IMR-90 (cell line): ENCODE measurements at regions of chr1 and their contacts with region 1.

Region 1: GRCh38 chr1:42908046-42908445 is 50.6 kb downstream of the SLC2A1 start:
- DNase-seq: no peak
- ATAC-seq: no peak
- H3K4me3 ChIP-seq: no peak overlapping the region
- H3K27ac ChIP-seq: no peak overlapping the region
- H3K4me1 ChIP-seq: no peaks in the 10 kb centered on the region
- H3K27me3 ChIP-seq: peaks cover 18% of the 10 kb centered on the region
- CTCF ChIP-seq: no peak
- POLR2A ChIP-seq: no peak
- RAD21 ChIP-seq: no peak

Region 2: DNA sequence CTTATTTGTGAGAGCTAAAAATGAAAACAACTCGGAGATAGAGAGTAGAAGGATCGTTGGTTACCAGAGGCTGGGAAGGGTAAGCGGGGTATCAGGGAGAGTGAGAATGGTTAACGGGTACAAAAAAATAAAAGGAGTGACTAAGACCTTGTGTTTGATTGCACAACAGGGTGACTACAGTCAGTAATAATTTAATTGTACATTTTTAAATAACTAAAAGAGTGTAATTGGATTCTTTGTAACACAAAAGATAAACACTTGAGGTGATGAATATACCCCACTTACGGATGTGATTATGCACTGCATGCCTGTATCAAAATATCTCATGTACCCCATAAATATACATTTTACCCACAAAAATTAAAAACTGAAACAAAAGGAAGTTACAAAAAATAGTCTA is 602.4 kb before region 1 on chr1:
- CTCF ChIA-PET with region 1: no interaction called
- POLR2A ChIA-PET with region 1: no interaction called
- dilution Hi-C with region 1: no loop called
- in situ Hi-C with region 1: no loop called
- intact Hi-C with region 1: no loop called
- DNase-seq: peak; percentile 54
- ATAC-seq: peak; percentile 63
- H3K4me3 ChIP-seq: no peak overlapping the region
- H3K27ac ChIP-seq: no peak overlapping the region
- H3K4me1 ChIP-seq: peaks cover 5% of the 10 kb centered on the region
- H3K27me3 ChIP-seq: no peaks in the 10 kb centered on the region
- CTCF ChIP-seq: no peak
- POLR2A ChIP-seq: no peak
- RAD21 ChIP-seq: no peak

Region 3: DNA sequence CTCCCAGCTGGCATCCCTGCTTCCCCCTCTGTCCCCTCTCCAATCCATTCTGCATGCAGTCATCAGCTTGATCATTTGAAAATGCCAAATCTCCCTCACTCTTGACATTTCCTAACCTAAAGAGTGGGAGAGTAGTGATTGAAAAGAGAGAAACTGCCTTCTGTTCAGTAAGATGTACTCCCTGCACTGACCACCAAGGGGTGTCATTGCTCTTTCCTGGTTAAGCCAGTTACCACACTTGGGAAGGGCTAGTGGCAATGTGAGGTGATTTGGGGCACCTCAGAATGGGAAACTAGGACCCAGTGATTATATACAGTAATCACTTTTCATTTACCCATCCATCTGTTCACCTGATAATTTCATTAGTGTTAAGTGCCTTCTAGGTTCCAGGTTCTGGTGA is 130.2 kb before region 1 on chr1:
- CTCF ChIA-PET with region 1: interaction called, 3 read pairs
- POLR2A ChIA-PET with region 1: no interaction called
- dilution Hi-C with region 1: no loop called
- in situ Hi-C with region 1: loop called (anchors 10 kb)
- intact Hi-C with region 1: loop called (anchors 2 kb)
- DNase-seq: peak; percentile 46
- ATAC-seq: peak; percentile 95
- H3K4me3 ChIP-seq: no peak overlapping the region
- H3K27ac ChIP-seq: no peak overlapping the region
- H3K4me1 ChIP-seq: no peaks in the 10 kb centered on the region
- H3K27me3 ChIP-seq: no peaks in the 10 kb centered on the region
- CTCF ChIP-seq: peak; percentile 71
- POLR2A ChIP-seq: no peak
- RAD21 ChIP-seq: peak; percentile 86

Region 4: DNA sequence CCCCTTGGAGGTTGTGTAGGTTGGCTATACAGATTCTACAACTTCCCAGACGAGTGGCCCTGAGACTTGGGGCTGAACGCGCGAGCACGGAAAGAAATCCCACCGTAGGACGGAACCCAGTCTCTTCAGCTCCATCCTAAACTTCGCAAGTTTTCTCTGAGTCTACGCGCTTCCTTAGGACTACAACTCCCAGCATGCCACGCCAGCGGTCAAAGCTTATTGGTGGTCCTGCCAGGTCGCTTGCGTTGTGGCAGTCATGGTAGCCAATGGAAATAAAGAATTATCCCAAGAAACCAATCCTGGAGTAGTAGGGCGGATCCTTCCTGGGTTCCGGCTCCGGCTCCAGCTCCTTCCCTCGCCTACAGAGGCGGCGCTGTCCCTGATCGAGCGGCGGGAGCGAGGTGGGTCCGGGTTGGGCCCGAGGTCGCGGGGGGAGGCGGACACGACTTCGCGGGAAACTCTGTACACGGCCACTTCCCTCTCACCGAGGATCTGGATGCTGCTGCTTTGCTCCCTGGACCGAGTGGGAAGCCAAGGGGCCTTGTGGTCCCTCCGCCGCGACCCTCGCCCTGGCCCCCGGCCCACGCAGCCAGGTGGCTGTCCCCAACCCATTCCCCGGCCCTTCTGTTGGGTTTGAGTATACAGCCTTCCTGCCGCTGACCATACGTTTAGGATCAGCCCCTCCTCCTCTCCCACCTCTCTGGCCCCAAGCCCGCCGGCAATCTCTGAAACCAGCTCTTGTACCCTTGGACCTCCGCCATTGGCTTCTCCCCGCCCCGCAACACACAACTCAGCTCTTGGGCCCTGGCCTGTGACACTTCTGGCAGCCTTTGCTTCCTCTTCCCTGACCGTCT is 61.6 kb before region 1 on chr1 and contains the start of gene ZNF691:
- CTCF ChIA-PET with region 1: no interaction called
- POLR2A ChIA-PET with region 1: no interaction called
- dilution Hi-C with region 1: no loop called
- in situ Hi-C with region 1: no loop called
- intact Hi-C with region 1: no loop called
- DNase-seq: peak; percentile 98
- ATAC-seq: peak; percentile 98
- H3K4me3 ChIP-seq: peak within 1 kb of the TSS; percentile 67
- H3K27ac ChIP-seq: peak within 1 kb of the TSS; percentile 60
- H3K4me1 ChIP-seq: peaks cover 6% of the 10 kb centered on the region
- H3K27me3 ChIP-seq: no peaks in the 10 kb centered on the region
- CTCF ChIP-seq: peak; percentile 42
- POLR2A ChIP-seq: peak; percentile 44; the same call in 1 of the 2 replicates
- RAD21 ChIP-seq: no peak
- total RNA-seq, gene ZNF691: 13.6 and 15.3 TPM in 2 replicates